ENCODE measurements at regions of chr7 and their contacts with region 1.

Region 1: GRCh38 chr7:30594549-30595435 is at the start of gene GARS1:
- DNase-seq: peak; percentile 94
- ATAC-seq: peak; percentile 84
- H3K4me3 Mint-ChIP-seq: peak within 1 kb of the TSS; percentile 100
- H3K27ac Mint-ChIP-seq: peak within 1 kb of the TSS; percentile 100
- H3K4me1 Mint-ChIP-seq: peaks cover 51% of the 10 kb centered on the region
- H3K27me3 Mint-ChIP-seq: no peaks in the 10 kb centered on the region
- total RNA-seq, gene GARS1: 391 to 439 TPM

Region 2: GRCh38 chr7:30134611-30135545 is 459.9 kb before region 1 on chr7 and contains the start of gene MTURN:
- CTCF ChIA-PET with region 1: no interaction called
- POLR2A ChIA-PET with region 1: no interaction called
- intact Hi-C with region 1: loop called in 1 of 2 experiments (anchors 1 kb)
- DNase-seq: peak; percentile 92
- ATAC-seq: peak; percentile 83
- H3K4me3 Mint-ChIP-seq: peak within 1 kb of the TSS; percentile 81
- H3K27ac Mint-ChIP-seq: peak within 1 kb of the TSS; percentile 84
- H3K4me1 Mint-ChIP-seq: peaks cover 4% of the 10 kb centered on the region
- H3K27me3 Mint-ChIP-seq: no peaks in the 10 kb centered on the region
- total RNA-seq, gene MTURN: 4.2 TPM

Region 3: DNA sequence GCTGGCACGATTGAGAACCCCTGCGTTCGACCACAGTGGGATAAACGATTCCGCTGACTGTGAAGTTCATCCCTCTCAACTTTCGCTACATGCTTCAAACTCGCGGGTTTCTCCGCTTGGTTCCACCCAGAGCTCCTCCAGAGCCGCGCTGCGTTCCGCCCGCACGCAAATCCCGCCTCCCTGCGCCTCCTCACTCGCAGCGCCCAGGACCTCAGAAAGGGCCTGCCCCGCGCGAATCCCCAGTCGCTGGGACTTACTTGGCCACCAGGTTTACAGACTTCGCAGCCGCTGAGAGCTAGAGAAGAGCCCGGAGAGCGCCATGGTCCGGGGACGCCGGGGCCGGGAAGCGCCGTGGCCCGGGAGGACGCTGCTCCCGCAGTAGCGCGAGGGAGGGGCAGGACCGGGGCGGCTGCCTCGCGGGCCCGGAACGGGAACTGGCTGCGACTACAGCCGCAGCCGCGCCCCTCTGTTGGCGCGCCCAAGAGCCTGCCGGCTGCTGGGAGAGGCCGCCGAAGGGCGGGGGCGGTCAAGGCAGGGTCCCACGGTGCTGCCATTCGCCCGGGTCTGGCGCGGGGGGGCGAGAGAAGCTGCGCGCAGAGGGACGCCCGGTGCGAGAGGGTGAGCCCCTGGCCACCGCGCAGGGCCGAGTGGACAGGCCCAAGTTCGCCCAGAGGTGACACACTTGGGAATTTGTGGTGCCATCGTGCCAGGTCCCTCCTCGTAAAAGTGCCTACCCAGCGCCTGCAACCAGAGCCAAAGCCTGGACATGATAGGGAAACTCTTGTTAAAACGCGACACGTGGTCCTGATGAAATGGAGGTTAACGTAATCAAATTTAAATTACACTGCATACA is 116.2 kb before region 1 on chr7 and contains the start of gene NOD1:
- CTCF ChIA-PET with region 1: no interaction called
- POLR2A ChIA-PET with region 1: no interaction called
- intact Hi-C with region 1: loop called in 1 of 2 experiments (anchors 1 kb)
- DNase-seq: peak; percentile 86
- ATAC-seq: peak; percentile 89
- H3K4me3 Mint-ChIP-seq: peak within 1 kb of the TSS; percentile 88
- H3K27ac Mint-ChIP-seq: peak within 1 kb of the TSS; percentile 90
- H3K4me1 Mint-ChIP-seq: peaks cover 50% of the 10 kb centered on the region
- H3K27me3 Mint-ChIP-seq: no peaks in the 10 kb centered on the region
- total RNA-seq, gene NOD1: 10.8 to 11.0 TPM

Region 4: GRCh38 chr7:30504347-30505173 is 90.2 kb before region 1 on chr7 and contains the start of gene GGCT:
- CTCF ChIA-PET with region 1: no interaction called
- POLR2A ChIA-PET with region 1: no interaction called
- intact Hi-C with region 1: loop called (anchors 1 to 10 kb)
- DNase-seq: peak; percentile 98
- ATAC-seq: peak; percentile 99
- H3K4me3 Mint-ChIP-seq: peak within 1 kb of the TSS; percentile 84
- H3K27ac Mint-ChIP-seq: peak within 1 kb of the TSS; percentile 90
- H3K4me1 Mint-ChIP-seq: peaks cover 44% of the 10 kb centered on the region
- H3K27me3 Mint-ChIP-seq: no peaks in the 10 kb centered on the region
- total RNA-seq, gene GGCT: 48.8 to 76.8 TPM

Region 5: DNA sequence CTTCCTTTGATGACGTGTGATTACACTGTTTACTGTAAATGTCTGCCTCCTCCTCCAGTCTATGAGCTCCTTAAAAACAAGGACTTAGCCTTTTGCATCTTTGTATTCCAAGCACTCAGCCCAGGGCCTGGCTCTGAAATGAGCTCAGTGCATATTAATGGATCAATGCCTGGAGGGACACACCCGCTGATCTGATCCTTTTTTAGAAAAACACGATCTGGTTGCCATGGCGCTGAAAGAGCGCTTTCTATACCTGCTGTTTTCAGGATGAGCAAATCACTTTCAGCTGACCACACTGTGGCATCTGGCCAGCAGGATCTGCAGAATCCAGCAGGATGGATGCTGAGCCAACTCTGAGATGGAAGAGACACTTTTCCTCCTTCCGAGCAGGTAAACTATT is 38.0 kb before region 1 on chr7:
- CTCF ChIA-PET with region 1: no interaction called
- POLR2A ChIA-PET with region 1: no interaction called
- intact Hi-C with region 1: no loop called
- DNase-seq: no peak
- ATAC-seq: no peak
- H3K4me3 Mint-ChIP-seq: no peak overlapping the region
- H3K27ac Mint-ChIP-seq: no peak overlapping the region
- H3K4me1 Mint-ChIP-seq: no peaks in the 10 kb centered on the region
- H3K27me3 Mint-ChIP-seq: no peaks in the 10 kb centered on the region

Region 6: DNA sequence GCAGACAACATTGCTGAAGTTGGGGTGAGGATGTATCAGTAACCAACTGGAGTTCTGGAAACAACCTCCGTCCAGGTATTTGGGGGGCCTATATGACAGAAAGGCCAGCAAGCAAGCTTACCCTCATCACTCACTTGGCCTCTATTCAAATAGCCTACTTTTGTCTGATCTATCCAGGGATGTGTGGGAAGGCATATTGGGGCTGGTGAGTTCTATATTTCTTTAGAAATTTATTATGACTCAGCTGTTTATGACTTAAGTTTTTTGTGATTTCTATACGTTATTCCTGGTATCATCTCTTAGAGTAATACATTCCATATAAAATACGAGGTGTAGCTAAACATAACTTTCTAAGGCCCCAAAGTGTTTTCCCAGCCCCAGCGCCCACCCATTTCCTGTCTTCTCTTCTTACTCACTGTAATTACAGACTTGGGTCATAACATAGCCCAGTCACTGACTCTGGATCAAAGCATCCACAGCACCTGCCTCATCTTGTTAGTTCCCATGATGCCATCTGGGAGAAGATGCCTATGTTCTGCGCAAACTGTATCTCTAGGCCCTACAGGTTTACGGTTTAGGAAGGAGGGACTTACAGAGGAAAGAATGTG is 18.0 kb after region 1 on chr7:
- CTCF ChIA-PET with region 1: interaction called, 4 read pairs
- POLR2A ChIA-PET with region 1: no interaction called
- intact Hi-C with region 1: loop called (anchors 2 kb)
- DNase-seq: peak; percentile 64
- ATAC-seq: peak; percentile 82
- H3K4me3 Mint-ChIP-seq: no peak overlapping the region
- H3K27ac Mint-ChIP-seq: peak overlapping the region; percentile 81
- H3K4me1 Mint-ChIP-seq: peaks cover 46% of the 10 kb centered on the region
- H3K27me3 Mint-ChIP-seq: no peaks in the 10 kb centered on the region

Region 7: DNA sequence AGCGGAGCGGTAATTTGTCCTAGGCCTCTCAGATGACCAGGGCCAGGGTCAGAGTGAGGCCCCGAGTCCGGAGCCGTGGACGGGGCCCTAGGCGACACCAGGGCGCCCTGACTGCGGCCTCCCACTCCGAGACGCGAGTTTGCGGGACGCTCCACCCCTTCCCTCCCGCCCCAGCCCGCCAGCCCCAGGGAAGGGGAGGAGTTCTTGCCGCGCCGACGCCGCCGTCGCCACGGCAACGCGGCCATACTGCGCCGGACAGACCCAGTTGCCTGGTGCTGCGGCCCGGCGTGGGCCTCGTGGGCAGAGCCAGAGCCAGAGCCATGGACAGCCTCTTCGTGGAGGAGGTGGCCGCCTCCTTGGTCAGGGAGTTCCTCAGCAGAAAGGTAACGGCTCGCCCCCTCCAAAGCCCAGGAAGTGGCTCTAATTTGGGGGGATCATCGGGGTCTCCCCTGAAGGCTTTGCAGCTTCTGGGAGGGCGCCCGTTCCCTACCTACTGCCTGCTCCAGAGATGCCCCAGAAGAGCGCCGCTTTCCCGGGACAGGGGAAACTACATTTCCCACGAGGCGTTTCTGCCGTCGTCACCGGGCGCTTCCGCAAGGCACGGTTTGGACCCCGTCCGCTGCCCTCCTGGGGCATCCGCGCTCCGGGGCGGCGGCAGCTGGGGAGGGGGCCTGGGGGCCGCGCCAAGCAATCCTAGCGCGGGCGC is 176.5 kb after region 1 on chr7 and contains the start of gene MINDY4:
- CTCF ChIA-PET with region 1: no interaction called
- POLR2A ChIA-PET with region 1: no interaction called
- intact Hi-C with region 1: loop called in 1 of 2 experiments (anchors 1 kb)
- DNase-seq: peak; percentile 86
- ATAC-seq: peak; percentile 96
- H3K4me3 Mint-ChIP-seq: peak within 1 kb of the TSS; percentile 75
- H3K27ac Mint-ChIP-seq: peak within 1 kb of the TSS; percentile 74
- H3K4me1 Mint-ChIP-seq: peaks cover 11% of the 10 kb centered on the region
- H3K27me3 Mint-ChIP-seq: no peaks in the 10 kb centered on the region
- total RNA-seq, gene MINDY4: 1.4 to 1.7 TPM

Measured in activated CD4-positive, alpha-beta T cell treated with anti-CD3 and anti-CD28 coated beads for 36 hours (primary cell).